ENCODE measurements at regions of chr22 and their contacts with region 1.

Region 1: DNA sequence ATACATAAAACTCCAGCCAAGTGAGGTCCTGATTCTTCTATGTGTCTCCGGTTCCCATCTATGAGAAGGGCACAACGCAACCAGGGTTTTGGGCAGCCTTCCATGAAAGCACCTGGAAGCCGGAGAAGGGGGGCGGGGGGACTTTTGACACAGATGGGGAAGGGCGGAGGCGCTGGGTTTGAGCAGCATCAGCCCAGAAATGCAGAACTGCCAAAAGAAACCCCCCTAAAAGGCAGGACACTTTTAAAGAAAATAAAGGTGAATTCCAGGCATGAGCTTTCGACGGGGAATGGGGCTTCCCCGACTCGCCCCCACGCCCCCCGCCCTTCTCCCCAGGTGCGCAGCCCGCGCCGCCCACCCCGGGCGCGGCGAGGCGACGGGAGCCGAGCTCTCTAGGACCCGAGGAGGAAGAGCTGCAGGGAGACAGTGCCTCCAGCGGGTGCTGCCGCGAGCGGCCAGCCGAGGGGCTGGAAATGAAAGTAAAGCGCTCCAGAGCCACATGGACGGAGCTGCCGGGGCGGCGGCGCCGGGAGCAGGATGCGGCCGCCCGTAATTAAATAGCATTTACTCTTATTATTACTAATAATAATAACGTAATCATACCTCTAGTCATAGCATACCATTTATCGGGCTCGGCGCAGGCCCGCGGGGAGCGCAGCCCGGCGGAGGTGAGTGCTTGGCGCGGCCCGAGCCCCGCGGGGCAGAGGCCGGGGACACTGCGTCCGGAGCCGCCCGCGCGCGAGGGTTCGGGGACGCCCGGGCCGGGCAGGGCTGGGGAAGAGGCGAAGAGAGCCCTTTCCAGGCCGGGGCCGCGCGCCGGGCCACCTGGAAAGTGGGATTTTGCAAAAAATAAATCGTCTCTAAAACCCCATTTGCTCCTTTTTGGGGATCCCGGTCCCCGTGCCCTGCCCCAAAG is at the start of gene ZC3H7B:
- DNase-seq: peak; percentile 96
- CTCF ChIP-seq: peak; percentile 67

Region 2: DNA sequence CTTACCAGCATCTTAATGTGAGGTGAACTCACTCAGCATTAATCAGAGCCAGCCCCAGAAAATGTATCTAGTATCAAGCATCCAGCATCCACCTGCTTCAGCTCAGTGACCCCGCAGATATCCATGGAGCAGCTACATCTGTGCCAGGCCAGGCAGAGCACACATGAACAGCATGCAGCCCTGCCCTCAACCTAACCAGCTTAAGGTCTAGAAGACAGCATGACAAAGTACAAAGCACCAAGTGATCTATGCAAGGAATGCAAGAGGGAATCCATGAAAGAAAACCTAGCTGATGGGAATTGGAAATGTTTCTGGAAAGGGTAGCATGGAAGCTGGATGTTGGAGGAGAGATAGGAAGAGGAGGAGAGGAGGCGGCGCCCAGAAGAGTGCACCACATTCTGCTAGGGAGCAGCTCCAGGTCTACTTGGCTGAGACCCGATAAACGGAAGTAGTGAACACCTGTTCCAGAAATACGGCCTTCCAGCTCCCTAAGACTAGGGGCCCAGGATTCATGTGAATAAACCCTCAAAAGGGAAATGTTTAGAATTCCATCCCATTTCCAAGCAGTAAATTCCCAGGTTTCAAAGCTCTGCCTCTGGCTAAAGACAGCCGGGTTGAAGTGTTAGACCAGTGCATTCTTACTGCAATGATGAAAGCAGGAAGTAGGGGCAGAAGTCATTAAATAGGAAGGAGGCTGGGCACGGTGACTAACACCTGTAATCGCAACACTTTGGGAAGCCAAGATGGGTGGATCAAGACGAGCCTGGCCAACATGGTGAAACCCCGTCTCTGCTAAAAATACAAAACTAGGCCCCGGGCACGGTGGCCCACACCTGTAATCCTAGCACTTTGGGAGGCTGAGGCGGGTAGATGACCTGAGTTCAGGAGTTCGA is 119.8 kb before region 1 on chr22:
- CTCF ChIA-PET with region 1: no interaction called
- POLR2A ChIA-PET with region 1: no interaction called
- DNase-seq: no peak
- CTCF ChIP-seq: no peak

Region 3: DNA sequence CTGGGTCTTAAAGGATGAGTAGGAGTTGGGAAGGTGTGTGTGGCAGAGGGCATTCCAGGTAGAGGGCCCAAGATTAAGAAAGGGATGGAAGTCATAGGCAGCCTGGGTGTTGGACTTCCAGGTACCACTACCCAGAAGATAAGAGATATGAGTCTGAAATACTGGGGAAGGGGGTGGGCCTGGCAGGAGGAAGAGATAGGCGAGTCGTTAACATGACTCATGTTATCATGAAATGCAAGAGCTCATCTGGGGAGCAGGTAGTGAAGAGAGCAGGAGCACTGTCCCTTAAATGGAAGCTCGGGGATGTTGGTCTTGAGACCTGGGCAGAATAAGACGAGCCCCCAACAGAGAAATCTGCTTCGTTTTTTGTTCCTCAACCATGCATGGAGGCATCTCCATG is 10.1 kb after region 1 on chr22:
- CTCF ChIA-PET with region 1: interaction called, 13 read pairs
- POLR2A ChIA-PET with region 1: interaction called, 9 read pairs
- DNase-seq: no peak
- CTCF ChIP-seq: no peak

Region 4: GRCh38 chr22:41320416-41321240 is 19.3 kb after region 1 on chr22:
- CTCF ChIA-PET with region 1: no interaction called
- POLR2A ChIA-PET with region 1: interaction called, 10 read pairs
- DNase-seq: no peak
- CTCF ChIP-seq: no peak

Region 5: DNA sequence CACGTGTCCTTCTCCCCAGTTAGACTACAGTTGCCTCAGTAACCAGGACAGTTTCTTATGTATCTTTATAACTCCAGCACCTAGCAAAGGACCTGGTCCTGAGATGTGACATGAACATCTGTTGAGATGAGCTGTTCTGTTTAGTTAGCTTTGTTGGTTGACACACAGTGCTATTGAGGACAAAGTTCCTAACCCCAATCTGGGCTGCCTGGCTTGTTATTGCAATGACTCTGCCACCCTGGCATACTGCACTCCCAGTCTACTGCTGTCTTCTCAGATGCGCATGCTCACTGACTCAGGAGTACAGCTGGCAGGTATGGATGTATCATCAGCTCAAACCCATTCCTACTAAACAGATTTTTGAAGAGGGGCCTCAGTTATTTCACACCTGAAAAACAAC is 312.1 kb after region 1 on chr22:
- CTCF ChIA-PET with region 1: no interaction called
- POLR2A ChIA-PET with region 1: no interaction called
- DNase-seq: no peak
- CTCF ChIP-seq: no peak